Activated naive CD4-positive, alpha-beta T cell treated with anti-CD3 and anti-CD28 coated beads for 36 hours (primary cell): ENCODE measurements at regions of chr6 and their contacts with region 1.

Region 1: GRCh38 chr6:135088818-135089809 is 34.5 kb upstream of the HBS1L start:
- DNase-seq: peak; percentile 61
- H3K4me3 Mint-ChIP-seq: peak overlapping the region; percentile 23
- H3K27ac Mint-ChIP-seq: peak overlapping the region; percentile 78
- H3K4me1 Mint-ChIP-seq: peaks cover 86% of the 10 kb centered on the region
- H3K27me3 Mint-ChIP-seq: no peaks in the 10 kb centered on the region

Region 2: GRCh38 chr6:135014353-135014832 is 74.7 kb before region 1 on chr6:
- CTCF ChIA-PET with region 1: no interaction called
- intact Hi-C with region 1: loop called (anchors 1 kb)
- DNase-seq: peak; percentile 24
- H3K4me3 Mint-ChIP-seq: peak overlapping the region; percentile 2
- H3K27ac Mint-ChIP-seq: no peak overlapping the region
- H3K4me1 Mint-ChIP-seq: peaks cover 60% of the 10 kb centered on the region
- H3K27me3 Mint-ChIP-seq: no peaks in the 10 kb centered on the region

Region 3: GRCh38 chr6:135054569-135055498 is 34.3 kb before region 1 on chr6 and contains the start of gene HBS1L:
- CTCF ChIA-PET with region 1: interaction called, 6 read pairs
- intact Hi-C with region 1: loop called (anchors 1 kb)
- DNase-seq: peak; percentile 98
- H3K4me3 Mint-ChIP-seq: peak within 1 kb of the TSS; percentile 90
- H3K27ac Mint-ChIP-seq: peak within 1 kb of the TSS; percentile 96
- H3K4me1 Mint-ChIP-seq: peaks cover 23% of the 10 kb centered on the region
- H3K27me3 Mint-ChIP-seq: no peaks in the 10 kb centered on the region
- total RNA-seq, gene HBS1L: 150 to 153 TPM

Region 4: DNA sequence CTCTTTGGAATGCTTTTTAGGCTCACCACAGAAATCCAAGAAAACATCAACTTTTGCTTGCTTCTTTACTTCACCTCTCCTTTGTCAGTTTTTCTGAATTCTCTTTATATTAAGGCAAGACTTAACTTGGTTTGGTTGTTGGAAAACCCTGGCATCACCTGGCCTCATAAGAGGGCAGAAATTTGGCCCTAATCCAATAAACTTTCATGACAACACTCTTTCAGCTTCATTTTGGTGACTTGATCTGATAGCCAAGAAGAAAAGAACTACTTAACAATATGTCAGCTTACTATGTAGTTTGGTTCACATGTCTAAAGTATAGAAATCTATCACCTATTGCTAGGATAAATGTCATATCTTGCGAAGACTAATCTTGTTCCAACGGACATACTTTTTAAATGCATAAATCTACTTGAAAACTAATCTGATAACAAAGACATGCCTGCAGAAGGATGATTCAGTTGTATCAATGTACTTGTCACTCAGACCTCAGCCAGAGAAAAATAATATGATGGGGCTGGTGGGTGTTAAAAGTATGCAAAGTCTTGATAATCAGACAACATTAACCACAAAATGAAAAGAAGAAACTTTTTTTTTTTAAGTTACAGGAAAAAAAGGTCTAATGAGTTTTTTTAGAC is 15.2 kb before region 1 on chr6:
- CTCF ChIA-PET with region 1: interaction called, 6 read pairs
- intact Hi-C with region 1: loop called (anchors 1 kb)
- DNase-seq: no peak
- H3K4me3 Mint-ChIP-seq: no peak overlapping the region
- H3K27ac Mint-ChIP-seq: no peak overlapping the region
- H3K4me1 Mint-ChIP-seq: peaks cover 19% of the 10 kb centered on the region
- H3K27me3 Mint-ChIP-seq: no peaks in the 10 kb centered on the region

Region 5: GRCh38 chr6:135128268-135128914 is 39.3 kb after region 1 on chr6:
- CTCF ChIA-PET with region 1: interaction called, 5 read pairs
- intact Hi-C with region 1: loop called (anchors 1 kb)
- DNase-seq: peak; percentile 83
- H3K4me3 Mint-ChIP-seq: peak overlapping the region; percentile 26
- H3K27ac Mint-ChIP-seq: peak overlapping the region; percentile 74
- H3K4me1 Mint-ChIP-seq: peaks cover 43% of the 10 kb centered on the region
- H3K27me3 Mint-ChIP-seq: no peaks in the 10 kb centered on the region

Region 6: DNA sequence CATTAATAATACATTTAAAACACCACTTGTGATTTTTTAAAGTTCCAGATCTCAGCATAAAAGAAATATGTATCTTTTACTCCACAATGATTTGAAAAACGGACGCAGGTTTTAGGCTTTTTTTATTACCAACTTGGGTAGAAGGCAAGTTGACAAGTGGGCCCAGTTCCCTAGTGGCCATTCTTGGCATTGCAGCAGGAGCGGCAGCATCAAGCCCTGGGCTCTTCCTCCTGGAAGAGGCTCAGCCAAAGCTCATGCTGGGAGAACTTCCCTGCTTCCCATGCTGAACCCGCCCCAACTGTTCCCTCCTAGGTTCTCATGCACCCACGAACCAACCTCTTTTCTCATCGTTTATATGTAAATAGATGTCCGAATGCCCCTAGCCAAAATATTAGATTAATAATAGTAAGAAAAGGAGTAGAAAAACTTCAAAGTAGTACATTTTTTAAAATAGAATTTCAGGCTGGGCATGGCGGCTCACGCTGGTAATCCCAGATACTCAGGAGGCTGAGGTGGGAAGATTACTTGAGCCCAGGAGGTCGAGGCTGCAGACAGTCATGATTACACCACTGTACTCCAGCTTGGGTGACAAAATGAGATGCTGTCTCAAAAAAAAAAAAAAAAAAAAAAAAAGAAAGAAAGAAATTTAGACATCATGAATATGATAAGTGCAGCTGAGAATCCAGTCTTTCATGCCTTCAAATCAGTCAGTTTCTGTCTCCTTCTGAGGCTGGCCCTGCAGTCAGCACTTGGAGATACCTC is 73.7 kb after region 1 on chr6:
- CTCF ChIA-PET with region 1: interaction called, 6 read pairs
- intact Hi-C with region 1: loop called (anchors 1 kb)
- DNase-seq: peak; percentile 56
- H3K4me3 Mint-ChIP-seq: no peak overlapping the region
- H3K27ac Mint-ChIP-seq: peak overlapping the region; percentile 77
- H3K4me1 Mint-ChIP-seq: peaks cover 58% of the 10 kb centered on the region
- H3K27me3 Mint-ChIP-seq: no peaks in the 10 kb centered on the region